Transverse colon (tissue), 4 donors: ENCODE measurements at regions of chr9 and their contacts with region 1.

Region 1: DNA sequence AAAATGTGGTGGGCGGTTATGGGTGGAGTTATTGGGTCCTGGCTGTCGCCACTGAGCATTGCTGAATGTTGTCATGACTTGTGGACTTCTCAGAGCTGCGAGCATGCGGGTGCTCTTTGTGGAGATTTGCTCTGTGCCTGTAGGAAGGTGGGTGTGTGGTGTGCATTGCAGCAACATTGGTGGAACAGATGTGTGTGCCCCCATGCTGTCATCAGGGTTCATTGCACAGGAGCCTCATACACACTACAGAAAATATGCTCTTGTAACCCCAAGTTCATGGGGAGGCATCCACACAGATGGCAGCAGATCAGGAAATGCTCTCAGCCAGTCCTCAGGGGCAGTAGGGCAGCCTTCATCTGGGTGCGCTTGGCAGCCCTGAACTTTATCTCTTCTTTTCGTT is 55.9 kb upstream of the PHF2 start:
- DNase-seq: no peak
- H3K4me3 ChIP-seq: no peak overlapping the region
- H3K27ac ChIP-seq: no peak overlapping the region
- H3K4me1 ChIP-seq: no peaks in the 10 kb centered on the region
- H3K27me3 ChIP-seq: no peaks in the 10 kb centered on the region
- CTCF ChIP-seq: no peak
- EP300 ChIP-seq: no peak
- POLR2A ChIP-seq: no peak

Region 2: GRCh38 chr9:93345630-93346230 is 174.8 kb before region 1 on chr9:
- in situ Hi-C with region 1: no loop called
- intact Hi-C with region 1: no loop called
- DNase-seq: no peak
- H3K4me3 ChIP-seq: peak overlapping the region in 3 of 4 donors; percentile 24 to 54 (median 35)
- H3K27ac ChIP-seq: no peak overlapping the region
- H3K4me1 ChIP-seq: peaks cover 0 to 20% (median 3%) of the 10 kb centered on the region in 4 donors
- H3K27me3 ChIP-seq: peaks cover 18% of the 10 kb centered on the region
- CTCF ChIP-seq: no peak
- EP300 ChIP-seq: no peak
- POLR2A ChIP-seq: no peak

Region 3: DNA sequence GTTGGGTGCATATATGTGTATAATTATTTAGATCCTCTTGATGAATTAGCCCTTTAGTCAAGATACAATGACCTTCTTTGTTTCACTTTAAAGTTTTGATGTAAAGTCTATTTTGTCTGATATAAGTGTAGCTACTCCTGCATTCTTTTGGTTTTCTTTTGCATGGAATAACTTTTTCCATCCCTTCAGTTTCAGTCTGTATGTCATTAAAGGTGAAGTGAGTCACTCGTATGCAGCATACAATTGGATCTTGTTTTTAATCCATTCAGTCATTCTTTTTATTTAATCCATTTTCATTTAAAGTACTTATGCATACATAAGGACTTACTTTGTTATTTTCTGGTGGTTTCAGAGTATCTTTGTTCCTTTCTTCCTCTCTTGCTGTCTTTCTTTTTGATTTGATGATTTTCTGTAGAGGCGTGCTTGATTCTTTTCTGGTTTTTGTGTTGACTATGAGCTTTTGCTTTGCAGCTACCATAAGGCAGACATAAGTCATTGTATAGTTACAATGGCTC is 105.3 kb before region 1 on chr9:
- in situ Hi-C with region 1: no loop called
- intact Hi-C with region 1: no loop called
- DNase-seq: no peak
- H3K4me3 ChIP-seq: no peak overlapping the region
- H3K27ac ChIP-seq: no peak overlapping the region
- H3K4me1 ChIP-seq: no peaks in the 10 kb centered on the region
- H3K27me3 ChIP-seq: peaks cover 4% of the 10 kb centered on the region
- CTCF ChIP-seq: no peak
- EP300 ChIP-seq: no peak
- POLR2A ChIP-seq: no peak

Region 4: DNA sequence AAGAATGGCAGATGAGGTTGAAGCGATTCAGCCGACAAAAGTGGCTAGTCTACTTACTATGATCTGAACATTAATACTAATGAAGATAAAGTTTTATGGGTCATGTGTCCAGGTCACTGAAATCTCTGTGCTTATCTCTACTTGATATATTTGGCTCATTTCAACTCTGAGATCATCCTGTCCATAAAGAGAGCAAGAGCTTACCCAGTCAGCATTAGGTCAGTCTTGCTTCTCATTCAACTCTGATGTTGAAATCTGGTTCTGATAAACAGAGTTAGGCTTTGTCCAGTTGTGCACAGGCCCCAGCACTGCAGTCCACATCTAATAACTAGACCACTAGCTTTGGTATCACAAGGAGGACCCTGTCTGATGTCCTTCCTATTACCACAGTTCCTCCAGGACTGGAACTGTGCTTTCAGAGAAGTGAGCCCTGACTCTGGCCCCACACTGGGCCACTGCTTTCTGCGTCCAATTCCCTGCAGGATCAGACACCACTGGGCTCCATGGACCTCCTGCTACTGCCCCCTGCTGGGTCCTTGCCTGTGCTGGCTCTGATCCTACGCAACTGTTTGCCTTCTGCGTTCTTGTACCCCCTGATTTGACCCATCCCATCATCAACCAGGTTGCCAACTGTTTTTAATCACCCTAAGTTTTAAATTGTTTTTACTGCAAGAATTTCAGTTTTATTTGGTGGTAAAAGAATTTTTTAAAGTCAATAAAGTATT is 92.7 kb before region 1 on chr9:
- in situ Hi-C with region 1: no loop called
- intact Hi-C with region 1: no loop called
- DNase-seq: peak; percentile 54
- H3K4me3 ChIP-seq: no peak overlapping the region
- H3K27ac ChIP-seq: no peak overlapping the region
- H3K4me1 ChIP-seq: peaks cover 0 to 7% (median 0%) of the 10 kb centered on the region in 4 donors
- H3K27me3 ChIP-seq: no peaks in the 10 kb centered on the region
- CTCF ChIP-seq: peak; percentile 28 to 48 (median 33)
- EP300 ChIP-seq: no peak
- POLR2A ChIP-seq: no peak

Region 5: GRCh38 chr9:93536874-93537273 is 16.4 kb after region 1 on chr9:
- in situ Hi-C with region 1: no loop called
- intact Hi-C with region 1: loop called (anchors 1 kb)
- DNase-seq: no peak
- H3K4me3 ChIP-seq: no peak overlapping the region
- H3K27ac ChIP-seq: no peak overlapping the region
- H3K4me1 ChIP-seq: peaks cover 0 to 8% (median 0%) of the 10 kb centered on the region in 4 donors
- H3K27me3 ChIP-seq: no peaks in the 10 kb centered on the region
- CTCF ChIP-seq: no peak
- EP300 ChIP-seq: no peak
- POLR2A ChIP-seq: no peak